ENCODE measurements at regions of chr3 and their contacts with region 1.

Region 1: GRCh38 chr3:177158461-177158860 is 38.8 kb downstream of the TBL1XR1 start:
- DNase-seq: no peak
- ATAC-seq: no peak
- H3K4me3 ChIP-seq: no peak overlapping the region
- H3K4me3 Mint-ChIP-seq: no peak overlapping the region
- H3K27ac ChIP-seq: no peak overlapping the region
- H3K27ac Mint-ChIP-seq: peak overlapping the region in 3 of 9 donors; percentile 20 to 59 (median 55)
- H3K4me1 ChIP-seq: peaks cover 0 to 6% of the 10 kb centered on the region in 2 donors
- H3K4me1 Mint-ChIP-seq: peaks cover 31 to 81% (median 53%) of the 10 kb centered on the region in 7 donors
- H3K27me3 ChIP-seq: no peaks in the 10 kb centered on the region
- H3K27me3 Mint-ChIP-seq: no peaks in the 10 kb centered on the region

Region 2: DNA sequence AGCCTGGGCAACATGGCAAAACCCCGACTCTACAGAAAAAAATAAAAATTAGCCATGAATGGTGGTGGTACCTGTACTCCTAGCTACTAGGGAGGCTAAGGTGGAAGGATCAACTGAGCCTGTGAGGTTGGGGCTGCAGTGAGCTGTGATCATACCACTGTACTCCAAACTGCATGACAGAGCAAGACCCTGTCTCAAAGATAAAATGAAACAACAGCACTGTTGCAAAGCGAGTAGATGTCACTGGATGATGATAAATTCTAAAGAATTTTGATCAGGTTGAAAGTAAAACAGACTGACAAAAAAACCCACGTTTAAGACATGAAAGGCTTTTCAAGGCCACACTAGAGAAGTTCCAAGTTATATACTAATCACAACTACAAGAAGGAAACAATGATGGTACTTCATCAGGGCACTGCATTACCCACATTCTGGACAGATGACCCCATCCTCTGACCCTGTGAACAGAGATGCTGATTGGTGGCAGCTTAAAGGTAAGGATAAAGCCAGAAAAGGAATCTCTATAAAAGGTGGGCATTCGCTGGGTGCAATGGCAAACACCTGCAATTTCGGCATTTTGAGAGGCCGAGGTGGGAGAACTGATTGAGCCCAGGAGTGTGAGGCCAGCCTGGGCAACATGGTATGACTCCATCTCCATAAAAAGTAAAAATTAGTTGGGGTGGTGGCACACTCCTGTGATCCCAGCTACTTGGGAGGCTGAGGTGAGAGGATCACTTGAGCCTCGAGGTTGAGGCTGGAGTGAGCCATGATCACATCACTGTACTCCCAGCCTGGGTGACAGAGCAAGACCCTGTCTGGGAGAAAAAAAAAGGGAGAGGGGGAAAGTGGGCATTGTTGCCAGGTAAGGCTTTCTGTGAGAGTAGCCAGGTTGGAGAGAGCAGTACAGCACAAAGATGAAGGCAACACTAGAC is 20.4 kb before region 1 on chr3:
- CTCF ChIA-PET with region 1: no interaction called
- POLR2A ChIA-PET with region 1: interaction called, 5 read pairs
- intact Hi-C with region 1: loop called in 1 of 2 experiments (anchors 2 kb)
- DNase-seq: no peak
- ATAC-seq: no peak
- H3K4me3 ChIP-seq: no peak overlapping the region
- H3K4me3 Mint-ChIP-seq: peak overlapping the region in 9 of 10 donors; percentile 35 to 75 (median 55)
- H3K27ac ChIP-seq: no peak overlapping the region
- H3K27ac Mint-ChIP-seq: peak overlapping the region; percentile 28 to 85 (median 74)
- H3K4me1 ChIP-seq: peaks cover 26 to 29% of the 10 kb centered on the region in 2 donors
- H3K4me1 Mint-ChIP-seq: peaks cover 54 to 85% (median 69%) of the 10 kb centered on the region in 7 donors
- H3K27me3 ChIP-seq: no peaks in the 10 kb centered on the region
- H3K27me3 Mint-ChIP-seq: no peaks in the 10 kb centered on the region

Region 3: DNA sequence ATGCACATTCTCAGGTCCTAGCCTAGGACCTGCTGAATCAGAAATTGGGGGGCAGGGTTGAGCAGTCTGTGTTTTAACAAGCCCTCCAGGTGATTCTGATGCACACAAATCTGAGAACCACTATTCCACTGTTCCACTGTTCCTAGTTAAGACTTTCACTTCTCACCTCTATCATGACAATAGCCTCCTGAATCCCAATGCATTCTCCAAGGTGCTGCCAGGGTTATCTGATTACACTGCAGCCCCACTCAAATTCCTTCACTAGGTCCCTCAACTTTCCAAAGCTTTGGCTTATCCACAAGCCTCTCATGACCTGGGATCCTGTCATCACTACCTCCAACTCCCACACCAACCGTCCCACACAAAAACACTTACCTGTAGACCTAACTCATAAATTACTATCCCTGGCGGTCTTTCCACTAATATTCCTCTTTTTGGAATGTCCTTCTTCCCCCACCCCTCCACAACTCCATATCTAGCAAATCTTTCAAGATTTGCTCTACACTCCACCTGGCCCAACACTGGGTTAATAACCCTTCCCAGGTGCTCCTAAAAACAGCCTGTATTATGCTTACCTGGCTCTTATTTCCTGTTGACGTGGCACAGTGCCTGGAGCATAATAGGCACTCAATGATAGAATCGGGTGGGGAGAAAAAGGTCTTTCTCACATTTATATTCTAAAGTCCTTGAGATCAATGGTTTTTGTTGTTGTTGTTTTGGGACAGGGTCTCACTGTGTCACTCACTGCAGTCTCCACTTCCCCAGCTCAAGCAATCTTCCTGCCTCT is 11.7 kb after region 1 on chr3:
- CTCF ChIA-PET with region 1: interaction called, 3 read pairs
- POLR2A ChIA-PET with region 1: interaction called, 3 read pairs
- intact Hi-C with region 1: loop called in 1 of 2 experiments (anchors 2 kb)
- DNase-seq: no peak
- ATAC-seq: no peak
- H3K4me3 ChIP-seq: no peak overlapping the region
- H3K4me3 Mint-ChIP-seq: peak overlapping the region in 9 of 10 donors; percentile 21 to 73 (median 61)
- H3K27ac ChIP-seq: no peak overlapping the region
- H3K27ac Mint-ChIP-seq: peak overlapping the region; percentile 2 to 82 (median 44)
- H3K4me1 ChIP-seq: peaks cover 22 to 28% of the 10 kb centered on the region in 2 donors
- H3K4me1 Mint-ChIP-seq: peaks cover 48 to 88% (median 71%) of the 10 kb centered on the region in 7 donors
- H3K27me3 ChIP-seq: no peaks in the 10 kb centered on the region
- H3K27me3 Mint-ChIP-seq: no peaks in the 10 kb centered on the region

Region 4: DNA sequence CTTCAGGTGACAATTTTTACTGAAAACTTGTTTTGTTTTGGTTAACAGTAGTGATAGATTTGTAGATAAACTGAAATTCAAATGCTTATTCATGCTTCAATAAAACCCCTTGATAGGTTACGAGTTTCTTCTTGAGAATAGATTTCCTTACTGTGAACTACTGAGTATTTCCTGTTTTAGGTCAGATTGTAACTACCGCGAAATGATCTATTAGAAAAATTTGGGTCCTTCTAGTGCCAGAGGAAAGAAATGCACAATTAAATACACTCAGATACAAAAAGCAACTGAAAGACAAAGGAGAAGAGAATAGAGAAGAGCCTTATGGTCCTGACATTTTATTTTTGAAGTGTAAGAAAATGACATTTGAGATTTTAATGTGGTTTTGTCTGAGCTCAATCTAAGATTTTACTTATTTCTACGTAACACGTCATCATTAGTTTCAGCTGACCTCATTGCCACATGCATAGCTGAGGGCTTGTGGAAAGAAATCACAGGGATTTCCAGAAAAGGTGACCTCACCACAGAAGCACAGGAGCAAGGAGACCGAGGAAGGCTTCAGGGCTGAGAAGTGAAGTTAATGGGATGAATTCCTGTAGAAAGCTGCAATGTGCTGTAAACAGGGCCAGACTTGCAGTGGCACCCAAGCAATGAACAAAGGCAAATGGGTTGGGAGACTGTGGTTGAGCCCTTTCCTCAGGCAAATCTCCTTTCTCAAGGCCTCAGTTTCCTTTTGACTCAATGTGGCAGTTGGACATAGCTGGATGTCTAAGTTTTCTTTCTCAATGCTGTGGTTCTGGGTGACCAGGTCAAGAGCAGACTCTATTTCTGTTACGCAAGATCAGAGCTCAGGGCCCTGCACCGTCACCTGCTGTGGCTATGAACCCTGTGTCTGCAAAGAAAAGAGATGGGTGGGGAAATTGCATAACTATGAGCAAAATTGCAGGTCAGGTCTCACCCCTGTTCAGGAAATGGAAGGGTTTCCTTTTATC is 290.8 kb after region 1 on chr3:
- CTCF ChIA-PET with region 1: no interaction called
- POLR2A ChIA-PET with region 1: no interaction called
- intact Hi-C with region 1: no loop called
- DNase-seq: no peak
- ATAC-seq: peak; percentile 82
- H3K4me3 ChIP-seq: no peak overlapping the region
- H3K4me3 Mint-ChIP-seq: peak overlapping the region in 8 of 10 donors; percentile 13 to 74 (median 44)
- H3K27ac ChIP-seq: no peak overlapping the region
- H3K27ac Mint-ChIP-seq: peak overlapping the region in 3 of 9 donors; percentile 59 to 73 (median 65)
- H3K4me1 ChIP-seq: peaks cover 5 to 20% of the 10 kb centered on the region in 2 donors
- H3K4me1 Mint-ChIP-seq: peaks cover 6 to 24% (median 16%) of the 10 kb centered on the region in 7 donors
- H3K27me3 ChIP-seq: no peaks in the 10 kb centered on the region
- H3K27me3 Mint-ChIP-seq: no peaks in the 10 kb centered on the region

Region 5: DNA sequence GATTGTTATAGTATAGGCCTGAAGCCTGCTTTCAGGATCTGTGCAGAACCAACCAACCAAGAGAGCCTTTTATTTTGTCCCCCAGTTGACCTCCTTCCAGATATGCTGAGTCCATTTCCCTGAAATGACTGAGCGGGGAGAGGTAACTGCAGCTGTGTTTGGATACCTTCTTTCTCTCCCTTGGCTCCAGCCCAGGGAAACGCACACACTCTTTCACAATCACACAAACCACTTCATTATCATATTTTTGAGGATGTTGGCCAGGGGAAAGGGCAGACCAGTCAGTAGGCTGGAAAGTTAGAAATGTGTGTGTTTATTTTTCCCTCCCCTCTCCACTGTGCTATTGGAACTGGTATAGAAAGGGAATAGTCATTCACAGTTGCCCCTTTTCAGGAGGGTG is 456.6 kb after region 1 on chr3:
- CTCF ChIA-PET with region 1: no interaction called
- POLR2A ChIA-PET with region 1: no interaction called
- intact Hi-C with region 1: no loop called
- DNase-seq: no peak
- ATAC-seq: peak; percentile 49
- H3K4me3 ChIP-seq: no peak overlapping the region
- H3K4me3 Mint-ChIP-seq: no peak overlapping the region
- H3K27ac ChIP-seq: no peak overlapping the region
- H3K27ac Mint-ChIP-seq: no peak overlapping the region
- H3K4me1 ChIP-seq: peaks cover 0 to 3% of the 10 kb centered on the region in 2 donors
- H3K4me1 Mint-ChIP-seq: peaks cover 4 to 23% (median 16%) of the 10 kb centered on the region in 7 donors
- H3K27me3 ChIP-seq: no peaks in the 10 kb centered on the region
- H3K27me3 Mint-ChIP-seq: no peaks in the 10 kb centered on the region

Measured in naive thymus-derived CD4-positive, alpha-beta T cell (primary cell).